Activated B cell treated with CpG ODN at 0.5 μM for 24 hours (primary cell): ENCODE measurements at regions of chr6 and their contacts with region 1.

Region 1: DNA sequence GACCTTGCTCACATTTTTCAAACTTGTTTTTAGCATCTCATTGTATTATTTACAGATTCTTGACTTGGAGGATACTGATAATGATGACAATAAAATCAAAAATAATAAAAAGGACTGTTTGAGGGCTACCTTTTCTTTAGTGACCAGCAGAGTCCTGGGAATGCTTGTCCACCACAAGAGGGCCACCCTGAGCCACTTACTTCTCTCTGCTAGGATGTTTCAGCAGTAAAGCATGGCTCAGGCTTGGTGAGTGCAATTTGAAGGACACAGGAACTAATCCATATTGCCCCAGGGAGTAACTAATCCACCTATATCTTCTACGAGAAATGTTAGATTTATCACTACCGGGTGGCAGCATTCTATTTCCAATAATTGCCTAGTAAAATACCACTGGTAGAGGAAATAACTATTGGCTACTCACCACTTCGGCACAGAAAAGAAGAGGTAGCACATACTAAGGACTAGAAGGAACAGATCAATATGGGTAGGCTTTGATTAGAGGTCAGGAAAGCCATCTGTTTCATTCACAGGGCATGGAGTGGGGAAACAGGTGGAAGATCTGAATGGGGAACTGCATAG is 5.8 kb upstream of the KIAA0408 start:
- DNase-seq: no peak
- ATAC-seq: peak; percentile 52
- H3K4me3 Mint-ChIP-seq: no peak overlapping the region
- H3K27ac Mint-ChIP-seq: no peak overlapping the region
- H3K4me1 Mint-ChIP-seq: no peaks in the 10 kb centered on the region
- H3K27me3 Mint-ChIP-seq: no peaks in the 10 kb centered on the region
- CTCF ChIP-seq: no peak

Region 2: GRCh38 chr6:127366281-127367022 is 98.5 kb before region 1 on chr6:
- CTCF ChIA-PET with region 1: no interaction called
- POLR2A ChIA-PET with region 1: no interaction called
- intact Hi-C with region 1: no loop called
- DNase-seq: no peak
- ATAC-seq: no peak
- H3K4me3 Mint-ChIP-seq: no peak overlapping the region
- H3K27ac Mint-ChIP-seq: no peak overlapping the region
- H3K4me1 Mint-ChIP-seq: no peaks in the 10 kb centered on the region
- H3K27me3 Mint-ChIP-seq: no peaks in the 10 kb centered on the region
- CTCF ChIP-seq: no peak

Region 3: GRCh38 chr6:127539272-127539671 is 74.3 kb after region 1 on chr6:
- CTCF ChIA-PET with region 1: interaction called, 15 read pairs
- POLR2A ChIA-PET with region 1: no interaction called
- intact Hi-C with region 1: loop called (anchors 1 kb)
- DNase-seq: no peak
- ATAC-seq: no peak
- H3K4me3 Mint-ChIP-seq: no peak overlapping the region
- H3K27ac Mint-ChIP-seq: no peak overlapping the region
- H3K4me1 Mint-ChIP-seq: no peaks in the 10 kb centered on the region
- H3K27me3 Mint-ChIP-seq: peaks cover 8% of the 10 kb centered on the region
- CTCF ChIP-seq: no peak

Region 4: DNA sequence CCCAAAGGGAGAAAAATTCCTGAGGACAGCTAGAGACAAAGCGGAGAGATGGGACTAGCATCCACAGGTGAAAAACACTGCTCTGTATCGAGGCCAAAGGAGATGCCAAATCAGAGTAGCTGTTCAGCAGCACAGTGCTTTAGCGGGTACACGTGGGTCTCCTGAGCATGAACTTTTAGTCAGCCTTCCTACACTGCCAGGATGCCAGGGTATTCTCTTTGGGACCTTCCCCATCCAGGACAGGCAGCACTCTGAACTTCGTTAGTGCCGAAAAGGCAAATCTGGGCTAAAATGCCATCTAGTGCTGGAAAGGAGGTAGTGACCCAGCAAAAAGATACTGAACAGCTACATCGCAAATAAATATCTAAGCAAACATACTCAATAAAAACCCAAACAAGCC is 176.9 kb after region 1 on chr6:
- CTCF ChIA-PET with region 1: no interaction called
- POLR2A ChIA-PET with region 1: no interaction called
- intact Hi-C with region 1: loop called (anchors 2 kb)
- DNase-seq: no peak
- ATAC-seq: no peak
- H3K4me3 Mint-ChIP-seq: no peak overlapping the region
- H3K27ac Mint-ChIP-seq: no peak overlapping the region
- H3K4me1 Mint-ChIP-seq: no peaks in the 10 kb centered on the region
- H3K27me3 Mint-ChIP-seq: peaks cover 5% of the 10 kb centered on the region
- CTCF ChIP-seq: no peak